CD8-positive, alpha-beta T cell (primary cell): ENCODE measurements at regions of chr5 and their contacts with region 1.

Region 1: DNA sequence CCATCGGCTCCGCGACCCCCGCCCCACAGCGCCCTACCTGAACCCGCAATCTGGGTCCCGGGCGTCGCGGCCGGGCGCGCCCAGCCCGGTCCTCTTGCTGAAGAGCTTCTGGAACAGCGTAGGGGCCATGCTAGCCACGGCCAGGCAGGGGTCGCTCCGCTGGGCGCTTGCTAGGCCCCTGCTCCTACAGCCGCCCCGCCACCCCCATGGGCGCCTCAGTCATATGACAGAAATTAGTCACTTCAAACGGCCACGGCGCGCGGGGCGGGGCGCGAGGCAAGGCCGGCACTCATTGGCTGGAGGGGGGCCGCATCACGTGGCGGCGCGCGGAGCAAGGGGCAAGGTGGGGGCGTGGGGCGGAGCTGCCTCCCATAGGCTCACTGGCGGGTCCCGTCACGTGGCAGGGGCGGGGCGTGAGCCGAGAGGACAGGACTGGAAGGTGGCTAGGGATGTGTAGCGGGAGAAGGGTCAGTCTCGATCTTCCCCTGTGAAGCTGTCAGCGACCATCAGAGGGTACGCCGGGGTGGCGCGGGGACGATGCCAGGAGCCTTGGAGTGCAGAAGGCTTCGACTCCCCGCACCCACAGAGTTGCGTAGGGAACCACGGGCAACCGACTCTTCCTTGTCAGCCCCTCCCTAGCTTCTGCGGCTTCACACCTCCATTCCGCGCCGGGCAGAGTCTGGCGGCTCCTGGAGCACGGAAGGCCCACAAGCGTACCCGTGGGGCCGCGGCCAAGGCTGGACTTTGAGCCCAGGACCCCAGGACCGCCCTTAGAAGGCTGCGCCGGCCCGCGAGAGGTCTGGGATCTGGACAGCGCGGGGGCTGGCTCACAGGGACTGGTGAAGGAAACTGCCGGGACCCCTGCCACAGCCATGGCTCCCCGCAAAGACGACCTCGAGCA is at the start of gene FNIP1:
- DNase-seq: peak; percentile 96 to 99 (median 98)
- ATAC-seq: peak; percentile 94
- H3K4me3 ChIP-seq: peak within 1 kb of the TSS; percentile 82 to 90
- H3K4me3 Mint-ChIP-seq: peak within 1 kb of the TSS; percentile 97
- H3K27ac ChIP-seq: peak within 1 kb of the TSS; percentile 88 to 93
- H3K27ac Mint-ChIP-seq: peak within 1 kb of the TSS; percentile 98
- H3K4me1 ChIP-seq: peaks cover 20% of the 10 kb centered on the region
- H3K4me1 Mint-ChIP-seq: peaks cover 37% of the 10 kb centered on the region
- H3K27me3 ChIP-seq: no peaks in the 10 kb centered on the region
- H3K27me3 Mint-ChIP-seq: no peaks in the 10 kb centered on the region
- CTCF ChIP-seq: no peak
- total RNA-seq, gene FNIP1: 29.4 to 29.7 TPM

Region 2: GRCh38 chr5:131263648-131264450 is 533.2 kb before region 1 on chr5 and contains the start of gene CDC42SE2:
- CTCF ChIA-PET with region 1: no interaction called
- POLR2A ChIA-PET with region 1: no interaction called
- intact Hi-C with region 1: loop called in 1 of 2 experiments (anchors 10 kb)
- DNase-seq: peak; percentile 77 to 96 (median 86)
- ATAC-seq: peak; percentile 83
- H3K4me3 ChIP-seq: peak within 1 kb of the TSS; percentile 93 to 98
- H3K4me3 Mint-ChIP-seq: peak within 1 kb of the TSS; percentile 87
- H3K27ac ChIP-seq: peak within 1 kb of the TSS; percentile 90 to 93
- H3K27ac Mint-ChIP-seq: peak within 1 kb of the TSS; percentile 95
- H3K4me1 ChIP-seq: peaks cover 42% of the 10 kb centered on the region
- H3K4me1 Mint-ChIP-seq: peaks cover 56% of the 10 kb centered on the region
- H3K27me3 ChIP-seq: no peaks in the 10 kb centered on the region
- H3K27me3 Mint-ChIP-seq: no peaks in the 10 kb centered on the region
- CTCF ChIP-seq: no peak
- total RNA-seq, gene CDC42SE2: 340 to 348 TPM

Region 3: DNA sequence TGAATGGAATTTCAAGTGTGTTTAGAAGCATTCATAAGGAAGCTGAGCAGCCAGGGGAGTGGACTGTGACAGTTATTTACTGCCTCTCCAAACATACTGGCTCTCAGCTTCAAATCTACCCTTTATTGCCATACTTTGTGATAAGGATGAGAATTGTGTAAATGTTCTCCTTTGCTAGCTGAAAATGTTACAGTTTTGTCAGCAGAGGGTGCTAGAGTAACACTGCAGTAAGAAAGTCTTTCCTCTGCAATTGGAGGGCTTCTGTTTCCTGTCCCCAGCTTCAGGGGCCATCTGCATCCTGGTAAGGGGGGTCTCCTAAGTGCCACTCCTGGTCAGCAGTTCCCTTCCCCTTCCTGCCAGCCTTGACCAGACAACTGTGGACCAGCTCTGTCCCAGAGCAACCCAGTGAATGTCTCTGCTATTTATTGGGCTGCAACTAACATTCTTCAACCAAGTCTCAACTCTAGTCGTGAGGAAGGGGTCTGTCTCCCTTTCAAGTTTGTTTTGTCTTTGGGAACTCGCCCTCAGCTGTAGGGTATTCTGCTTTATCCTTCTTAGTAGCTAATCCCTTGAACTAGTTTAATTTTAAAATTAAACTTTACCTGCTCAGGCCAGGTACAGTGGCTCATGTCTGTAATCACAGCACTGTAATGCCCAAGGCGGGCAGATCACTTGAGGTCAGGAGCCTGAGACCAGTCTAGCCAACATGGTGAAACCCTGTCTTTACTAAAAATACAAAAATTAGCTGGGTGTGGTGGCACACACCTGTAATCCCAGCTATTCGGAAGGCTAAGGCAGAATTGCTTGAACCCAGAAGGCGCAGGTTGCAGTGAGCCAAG is 207.3 kb before region 1 on chr5:
- CTCF ChIA-PET with region 1: interaction called, 3 read pairs
- POLR2A ChIA-PET with region 1: no interaction called
- intact Hi-C with region 1: loop called (anchors 2 to 5 kb)
- DNase-seq: peak in 6 of 9 experiments; percentile 8 to 80 (median 47)
- ATAC-seq: peak; percentile 77
- H3K4me3 ChIP-seq: no peak overlapping the region
- H3K4me3 Mint-ChIP-seq: no peak overlapping the region
- H3K27ac ChIP-seq: no peak overlapping the region
- H3K27ac Mint-ChIP-seq: no peak overlapping the region
- H3K4me1 ChIP-seq: peaks cover 13% of the 10 kb centered on the region
- H3K4me1 Mint-ChIP-seq: peaks cover 50% of the 10 kb centered on the region
- H3K27me3 ChIP-seq: no peaks in the 10 kb centered on the region
- H3K27me3 Mint-ChIP-seq: no peaks in the 10 kb centered on the region
- CTCF ChIP-seq: peak; percentile 89

Region 4: GRCh38 chr5:131974956-131975726 is 178.1 kb after region 1 on chr5:
- CTCF ChIA-PET with region 1: no interaction called
- POLR2A ChIA-PET with region 1: no interaction called
- intact Hi-C with region 1: loop called in 1 of 2 experiments (anchors 2 kb)
- DNase-seq: peak in 7 of 9 experiments; percentile 7 to 75 (median 30)
- ATAC-seq: peak; percentile 74
- H3K4me3 ChIP-seq: peak overlapping the region; percentile 22 to 70
- H3K4me3 Mint-ChIP-seq: peak overlapping the region; percentile 84
- H3K27ac ChIP-seq: peak overlapping the region; percentile 49 to 77
- H3K27ac Mint-ChIP-seq: peak overlapping the region; percentile 90
- H3K4me1 ChIP-seq: peaks cover 47% of the 10 kb centered on the region
- H3K4me1 Mint-ChIP-seq: peaks cover 73% of the 10 kb centered on the region
- H3K27me3 ChIP-seq: no peaks in the 10 kb centered on the region
- H3K27me3 Mint-ChIP-seq: no peaks in the 10 kb centered on the region
- CTCF ChIP-seq: no peak

Region 5: DNA sequence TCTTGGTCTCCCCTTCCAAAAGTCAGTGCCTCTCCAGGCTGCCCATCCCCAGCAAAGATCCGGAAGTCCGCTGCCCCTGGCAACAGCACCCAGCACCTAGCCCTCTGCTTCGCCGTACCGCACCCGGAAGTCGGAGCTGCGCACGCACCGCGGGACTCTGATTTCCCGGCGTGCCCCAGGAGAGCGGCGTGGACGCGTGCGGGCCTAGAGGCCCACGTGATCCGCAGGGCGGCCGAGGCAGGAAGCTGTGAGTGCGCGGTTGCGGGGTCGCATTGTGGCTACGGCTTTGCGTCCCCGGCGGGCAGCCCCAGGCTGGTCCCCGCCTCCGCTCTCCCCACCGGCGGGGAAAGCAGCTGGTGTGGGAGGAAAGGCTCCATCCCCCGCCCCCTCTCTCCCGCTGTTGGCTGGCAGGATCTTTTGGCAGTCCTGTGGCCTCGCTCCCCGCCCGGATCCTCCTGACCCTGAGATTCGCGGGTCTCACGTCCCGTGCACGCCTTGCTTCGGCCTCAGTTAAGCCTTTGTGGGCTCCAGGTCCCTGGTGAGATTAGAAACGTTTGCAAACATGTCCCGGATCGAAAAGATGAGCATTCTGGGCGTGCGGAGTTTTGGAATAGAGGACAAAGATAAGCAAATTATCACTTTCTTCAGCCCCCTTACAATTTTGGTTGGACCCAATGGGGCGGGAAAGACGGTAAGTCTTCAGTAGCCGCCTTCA is 759.9 kb after region 1 on chr5 and contains the start of gene RAD50:
- CTCF ChIA-PET with region 1: no interaction called
- POLR2A ChIA-PET with region 1: no interaction called
- intact Hi-C with region 1: loop called in 1 of 2 experiments (anchors 10 kb)
- DNase-seq: peak; percentile 83 to 96 (median 91)
- ATAC-seq: peak; percentile 95
- H3K4me3 ChIP-seq: peak within 1 kb of the TSS; percentile 62 to 97
- H3K4me3 Mint-ChIP-seq: peak within 1 kb of the TSS; percentile 98
- H3K27ac ChIP-seq: peak within 1 kb of the TSS; percentile 68 to 91
- H3K27ac Mint-ChIP-seq: peak within 1 kb of the TSS; percentile 98
- H3K4me1 ChIP-seq: peaks cover 21% of the 10 kb centered on the region
- H3K4me1 Mint-ChIP-seq: peaks cover 28% of the 10 kb centered on the region
- H3K27me3 ChIP-seq: no peaks in the 10 kb centered on the region
- H3K27me3 Mint-ChIP-seq: no peaks in the 10 kb centered on the region
- CTCF ChIP-seq: no peak
- total RNA-seq, gene RAD50: 8.0 to 8.7 TPM